B cell (primary cell): ENCODE measurements at regions of chr13 and their contacts with region 1.

Region 1: DNA sequence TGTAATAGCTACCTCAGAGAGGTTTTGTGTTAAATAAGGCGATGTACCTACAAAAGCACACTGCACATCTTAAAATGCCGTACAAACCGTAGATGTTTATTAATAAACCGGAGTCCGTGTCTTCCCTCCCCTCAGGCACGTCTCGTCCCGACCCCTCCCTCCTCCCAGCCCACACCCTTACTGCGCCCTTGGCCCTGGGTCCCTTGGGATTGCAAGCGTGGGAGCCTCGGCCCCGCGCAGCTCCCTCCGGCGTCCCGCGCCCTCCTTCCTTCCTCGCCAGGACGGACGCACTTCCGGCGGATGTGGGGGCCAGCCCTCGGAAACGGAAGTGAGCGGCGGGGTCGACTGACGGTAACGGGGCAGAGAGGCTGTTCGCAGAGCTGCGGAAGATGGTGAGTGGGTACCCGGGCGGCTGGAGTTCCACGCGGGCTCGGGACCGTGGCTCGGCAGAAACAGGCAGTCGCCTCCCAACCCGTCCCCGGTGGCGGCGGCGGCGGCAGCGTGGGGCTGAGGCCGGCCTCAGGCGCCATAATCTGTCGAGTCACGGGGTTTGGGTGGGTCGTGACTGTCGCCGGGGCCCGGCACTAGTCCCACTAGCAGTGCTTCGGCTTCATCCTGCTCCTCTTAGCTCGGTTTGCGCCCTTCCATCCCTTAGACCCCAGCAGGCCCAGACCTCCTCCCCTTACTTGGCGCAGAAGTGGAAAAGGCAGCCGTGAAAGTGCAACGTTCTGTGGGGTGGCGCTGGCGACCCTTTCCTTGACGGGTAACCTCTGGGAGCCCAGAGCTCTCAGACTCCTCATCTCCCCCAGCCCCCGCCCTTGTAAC is at the start of gene POMP:
- DNase-seq: peak; percentile 97
- ATAC-seq: peak; percentile 92
- H3K4me3 ChIP-seq: peak within 1 kb of the TSS; percentile 78 to 97 (median 89)
- H3K4me3 Mint-ChIP-seq: peak within 1 kb of the TSS; percentile 97
- H3K27ac ChIP-seq: peak within 1 kb of the TSS; percentile 86 to 93
- H3K27ac Mint-ChIP-seq: peak within 1 kb of the TSS; percentile 98
- H3K4me1 ChIP-seq: peaks cover 43 to 44% of the 10 kb centered on the region in 2 donors
- H3K4me1 Mint-ChIP-seq: peaks cover 61% of the 10 kb centered on the region
- H3K27me3 ChIP-seq: no peaks in the 10 kb centered on the region
- H3K27me3 Mint-ChIP-seq: no peaks in the 10 kb centered on the region
- CTCF ChIP-seq: no peak
- total RNA-seq, gene POMP: 18.9 and 28.7 TPM in 2 replicates

Region 2: GRCh38 chr13:28047757-28048388 is 611.1 kb before region 1 on chr13:
- CTCF ChIA-PET with region 1: no interaction called
- POLR2A ChIA-PET with region 1: no interaction called
- intact Hi-C with region 1: loop called (anchors 5 kb)
- DNase-seq: peak; percentile 84
- ATAC-seq: peak; percentile 92
- H3K4me3 ChIP-seq: peak overlapping the region in 3 of 5 experiments; percentile 22 to 33 (median 23)
- H3K4me3 Mint-ChIP-seq: peak overlapping the region; percentile 76
- H3K27ac ChIP-seq: peak overlapping the region; percentile 89 to 97
- H3K27ac Mint-ChIP-seq: peak overlapping the region; percentile 95
- H3K4me1 ChIP-seq: peaks cover 57 to 67% of the 10 kb centered on the region in 2 donors
- H3K4me1 Mint-ChIP-seq: peaks cover 56% of the 10 kb centered on the region
- H3K27me3 ChIP-seq: no peaks in the 10 kb centered on the region
- H3K27me3 Mint-ChIP-seq: no peaks in the 10 kb centered on the region
- CTCF ChIP-seq: no peak

Region 3: DNA sequence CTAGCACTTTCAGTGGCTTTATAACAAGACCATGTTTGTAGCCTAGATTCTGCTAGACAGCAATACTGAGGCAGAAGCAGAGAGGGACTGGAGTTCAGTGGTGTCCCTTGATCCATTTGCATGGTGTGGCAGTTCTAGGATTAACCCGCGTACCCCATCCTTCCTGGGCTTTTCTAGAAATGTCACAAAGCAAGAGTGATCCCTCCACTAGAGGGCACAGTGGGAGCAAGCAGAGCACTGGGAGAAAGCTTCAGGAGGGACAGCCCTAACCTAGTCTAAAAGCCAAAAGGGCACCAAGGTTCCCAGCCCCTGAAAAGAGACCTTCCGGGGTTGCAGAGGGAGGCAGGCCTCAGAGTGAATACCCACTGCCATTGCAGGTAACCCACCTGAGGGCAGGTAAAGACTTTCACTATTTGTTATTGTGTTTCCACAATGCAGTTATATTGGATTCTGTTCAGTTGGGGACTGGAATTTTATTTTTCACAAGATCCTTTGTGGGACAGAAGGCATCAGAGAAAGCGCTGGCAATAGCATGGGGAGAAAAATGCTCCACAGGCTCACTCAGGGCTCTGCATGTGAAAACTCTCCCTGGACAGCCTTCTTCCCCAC is 334.7 kb before region 1 on chr13:
- CTCF ChIA-PET with region 1: interaction called, 15 read pairs
- POLR2A ChIA-PET with region 1: interaction called, 5 read pairs
- intact Hi-C with region 1: loop called (anchors 5 kb)
- DNase-seq: peak; percentile 80
- ATAC-seq: peak; percentile 75
- H3K4me3 ChIP-seq: no peak overlapping the region
- H3K4me3 Mint-ChIP-seq: no peak overlapping the region
- H3K27ac ChIP-seq: no peak overlapping the region
- H3K27ac Mint-ChIP-seq: no peak overlapping the region
- H3K4me1 ChIP-seq: peaks cover 10 to 12% of the 10 kb centered on the region in 2 donors
- H3K4me1 Mint-ChIP-seq: peaks cover 5% of the 10 kb centered on the region
- H3K27me3 ChIP-seq: no peaks in the 10 kb centered on the region
- H3K27me3 Mint-ChIP-seq: no peaks in the 10 kb centered on the region
- CTCF ChIP-seq: peak; percentile 77

Region 4: DNA sequence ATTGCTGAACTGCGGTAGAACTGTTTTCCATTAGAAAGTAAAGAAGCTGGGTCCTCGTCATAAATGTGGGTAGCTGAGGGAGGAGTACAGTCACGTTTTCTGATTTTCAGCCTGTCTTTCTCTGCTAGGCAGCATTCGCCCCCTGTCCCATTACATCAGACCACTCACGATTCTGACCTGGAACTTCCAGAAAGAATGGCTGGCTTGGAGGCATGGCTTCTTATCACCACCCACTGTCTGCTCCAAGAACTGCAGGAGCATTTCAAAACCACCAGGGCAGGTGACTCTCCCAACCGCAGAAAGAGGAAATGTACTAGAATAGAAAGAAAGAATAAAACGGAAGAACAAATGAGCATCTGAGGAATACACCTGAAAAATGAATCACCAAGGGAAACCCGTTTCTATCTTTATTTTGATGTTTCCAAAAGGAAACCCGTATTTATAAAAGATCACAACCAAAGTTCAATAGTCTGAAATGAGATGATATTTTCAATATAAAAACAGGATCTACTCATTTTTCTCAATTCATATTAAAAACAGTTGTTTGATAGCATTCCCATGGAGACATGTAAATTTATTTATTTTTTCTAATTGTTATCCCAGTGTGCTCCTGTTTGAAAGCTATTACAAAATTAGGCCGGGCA is 22.2 kb before region 1 on chr13:
- CTCF ChIA-PET with region 1: interaction called, 13 read pairs
- POLR2A ChIA-PET with region 1: no interaction called
- intact Hi-C with region 1: loop called (anchors 1 kb)
- DNase-seq: peak; percentile 86
- ATAC-seq: peak; percentile 81
- H3K4me3 ChIP-seq: peak overlapping the region in 1 of 5 experiments; percentile 24
- H3K4me3 Mint-ChIP-seq: peak overlapping the region; percentile 57
- H3K27ac ChIP-seq: peak overlapping the region; percentile 25 to 72
- H3K27ac Mint-ChIP-seq: peak overlapping the region; percentile 51
- H3K4me1 ChIP-seq: peaks cover 36 to 42% of the 10 kb centered on the region in 2 donors
- H3K4me1 Mint-ChIP-seq: peaks cover 39% of the 10 kb centered on the region
- H3K27me3 ChIP-seq: no peaks in the 10 kb centered on the region
- H3K27me3 Mint-ChIP-seq: peaks cover 5% of the 10 kb centered on the region
- CTCF ChIP-seq: peak; percentile 73

Region 5: DNA sequence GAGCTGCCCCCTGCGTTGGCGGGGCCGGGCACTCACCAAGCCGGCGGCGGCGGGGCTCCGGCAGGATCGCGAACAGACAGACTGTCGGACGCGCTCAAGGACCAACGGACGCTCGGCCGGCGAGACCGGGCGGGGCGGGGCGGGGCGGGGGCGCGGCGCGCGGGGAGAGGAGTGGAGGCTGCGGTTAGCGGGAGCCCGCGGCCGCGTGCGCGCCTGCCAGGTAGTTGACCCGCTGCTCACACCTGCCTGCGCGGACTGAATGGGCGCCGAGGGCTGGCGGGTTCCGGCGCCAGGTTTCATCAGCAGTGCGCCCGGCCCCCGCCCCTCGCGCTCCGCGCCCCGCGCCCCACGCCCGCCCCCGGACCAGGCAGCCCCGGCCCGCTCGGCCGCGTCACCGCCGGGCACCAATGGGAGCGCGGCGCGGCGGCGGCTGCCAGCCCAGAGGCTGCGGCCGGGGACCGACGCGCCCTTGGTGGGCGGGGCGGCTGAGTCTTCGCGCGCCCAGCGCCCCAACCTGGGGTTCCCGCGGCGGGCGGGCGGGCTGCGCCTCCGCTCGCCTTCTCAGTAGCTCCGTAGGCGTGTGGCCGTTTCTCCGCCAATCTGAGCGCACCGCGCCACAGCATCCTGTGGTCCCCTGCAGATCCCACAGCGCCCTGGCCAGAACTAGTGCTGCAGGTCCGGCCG is 936.5 kb after region 1 on chr13 and contains the start of gene SLC7A1:
- CTCF ChIA-PET with region 1: no interaction called
- POLR2A ChIA-PET with region 1: no interaction called
- intact Hi-C with region 1: loop called (anchors 5 kb)
- DNase-seq: peak; percentile 91
- ATAC-seq: peak; percentile 91
- H3K4me3 ChIP-seq: peak within 1 kb of the TSS; percentile 49 to 89 (median 68)
- H3K4me3 Mint-ChIP-seq: peak within 1 kb of the TSS; percentile 92
- H3K27ac ChIP-seq: peak within 1 kb of the TSS; percentile 40 to 82
- H3K27ac Mint-ChIP-seq: peak within 1 kb of the TSS; percentile 92
- H3K4me1 ChIP-seq: peaks cover 9 to 13% of the 10 kb centered on the region in 2 donors
- H3K4me1 Mint-ChIP-seq: peaks cover 34% of the 10 kb centered on the region
- H3K27me3 ChIP-seq: no peaks in the 10 kb centered on the region
- H3K27me3 Mint-ChIP-seq: peaks cover 6% of the 10 kb centered on the region
- CTCF ChIP-seq: no peak
- total RNA-seq, gene SLC7A1: 23.1 and 24.2 TPM in 2 replicates